ENCODE measurements at regions of chr2 and their contacts with region 1.

Region 1: DNA sequence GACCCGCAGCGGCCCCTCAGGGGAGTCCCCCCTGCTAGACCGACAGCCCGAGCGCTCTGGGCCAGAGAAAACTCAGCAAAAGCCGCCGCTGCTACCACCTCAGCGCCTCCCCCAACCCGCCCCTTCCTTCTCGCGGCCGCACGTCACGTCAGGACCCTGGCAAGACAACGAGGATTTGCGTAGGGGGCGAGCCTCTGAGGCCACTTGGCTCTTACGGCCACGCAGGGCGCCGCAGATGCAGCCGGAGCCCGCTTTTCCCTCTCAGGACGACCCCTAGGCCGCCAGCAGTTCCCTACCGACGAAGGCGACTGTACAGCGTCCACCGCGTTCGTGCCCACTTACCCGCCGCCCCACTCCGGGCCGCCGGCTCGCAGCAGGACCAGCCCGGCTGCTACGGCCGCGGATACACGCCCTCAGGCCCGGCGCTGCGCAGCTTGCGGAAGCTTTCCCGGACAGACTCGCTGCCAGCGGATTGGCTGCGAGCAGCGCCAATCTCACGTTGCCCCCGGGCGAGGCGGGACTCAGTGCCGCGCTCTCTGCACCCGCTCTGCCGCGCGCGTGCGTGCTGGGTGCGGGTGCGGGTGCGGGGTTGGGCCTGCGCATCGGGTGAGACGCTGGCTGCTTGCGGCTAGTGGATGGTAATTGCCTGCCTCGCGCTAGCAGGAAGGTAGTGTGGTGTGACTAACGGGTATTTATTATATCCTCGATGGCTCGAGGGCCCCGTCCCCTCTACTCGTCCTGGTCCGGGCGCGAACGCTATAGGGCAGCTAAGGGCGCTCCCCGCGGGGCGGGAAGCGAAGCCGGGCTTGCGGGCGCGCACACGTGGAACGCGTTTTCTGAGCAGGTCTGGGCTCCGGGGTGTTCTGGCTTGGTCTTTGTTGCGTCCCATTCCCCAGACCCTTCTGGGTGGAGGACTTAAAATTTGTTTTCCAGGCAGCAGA is at the starts of genes ORMDL1 and PMS1:
- DNase-seq: peak; percentile 98
- total RNA-seq, gene ORMDL1: 25.7 TPM
- total RNA-seq, gene PMS1: 11.1 TPM

Region 2: DNA sequence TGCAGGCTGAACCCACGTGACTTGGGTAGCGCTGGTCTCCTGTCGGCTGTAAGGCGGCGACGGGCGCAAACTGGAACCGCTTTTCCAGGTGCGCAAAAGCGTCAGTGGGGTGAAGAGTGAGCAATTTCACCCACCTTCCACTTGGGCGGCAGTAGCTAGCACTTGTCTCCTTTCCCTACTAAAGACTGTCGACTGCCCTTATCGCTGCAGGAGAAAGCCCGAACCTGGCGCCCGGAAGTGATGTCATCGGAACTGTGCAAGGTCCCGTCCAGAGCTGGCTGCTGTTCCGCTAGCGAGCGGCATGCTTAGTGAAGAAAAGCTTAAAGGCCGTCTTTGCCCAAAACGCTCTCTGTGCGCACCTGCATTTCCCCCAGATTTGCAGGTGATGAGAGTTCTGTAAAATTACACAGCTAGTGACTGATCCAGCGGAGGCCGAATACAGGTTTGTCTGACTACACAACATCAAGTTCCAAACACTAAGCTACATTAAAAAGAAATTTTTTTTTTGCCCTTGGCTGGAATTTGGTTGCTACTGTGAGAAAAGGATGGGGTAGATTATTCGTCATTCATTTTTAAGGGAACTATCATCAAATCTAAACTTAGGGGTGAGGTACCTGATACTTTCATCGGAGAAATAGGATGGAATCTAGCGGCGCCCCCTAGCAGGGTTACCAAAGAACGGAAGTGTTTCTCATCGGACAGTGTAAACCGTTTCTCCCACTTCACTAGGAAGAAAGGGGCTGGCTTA is 21.5 kb before region 1 on chr2 and contains the start of gene OSGEPL1:
- intact Hi-C with region 1: loop called (anchors 1 kb)
- DNase-seq: peak; percentile 96
- total RNA-seq, gene OSGEPL1: 5.4 TPM

Region 3: DNA sequence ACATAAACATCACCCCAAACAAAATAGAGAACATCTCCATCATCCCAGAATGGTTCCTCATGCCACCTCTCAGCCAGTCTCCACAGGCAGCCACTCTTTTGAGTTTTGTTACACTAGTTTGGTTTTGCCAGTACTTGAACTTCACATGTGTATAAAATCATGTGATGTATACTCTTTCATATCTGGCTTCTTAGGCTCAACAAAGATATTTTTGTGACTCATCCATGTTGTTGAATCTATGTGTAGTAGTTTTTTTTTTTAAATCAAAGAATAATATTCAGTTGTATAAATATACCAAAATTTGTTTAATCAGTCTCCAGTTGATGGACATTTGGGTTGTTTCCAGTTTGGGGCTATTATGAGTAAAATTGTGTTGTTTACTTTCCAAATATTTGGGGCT is 76.0 kb after region 1 on chr2:
- intact Hi-C with region 1: no loop called
- DNase-seq: no peak

Measured in cardiac septum (tissue), 1 donor.